ENCODE measurements at regions of chr17 and their contacts with region 1.

Region 1: DNA sequence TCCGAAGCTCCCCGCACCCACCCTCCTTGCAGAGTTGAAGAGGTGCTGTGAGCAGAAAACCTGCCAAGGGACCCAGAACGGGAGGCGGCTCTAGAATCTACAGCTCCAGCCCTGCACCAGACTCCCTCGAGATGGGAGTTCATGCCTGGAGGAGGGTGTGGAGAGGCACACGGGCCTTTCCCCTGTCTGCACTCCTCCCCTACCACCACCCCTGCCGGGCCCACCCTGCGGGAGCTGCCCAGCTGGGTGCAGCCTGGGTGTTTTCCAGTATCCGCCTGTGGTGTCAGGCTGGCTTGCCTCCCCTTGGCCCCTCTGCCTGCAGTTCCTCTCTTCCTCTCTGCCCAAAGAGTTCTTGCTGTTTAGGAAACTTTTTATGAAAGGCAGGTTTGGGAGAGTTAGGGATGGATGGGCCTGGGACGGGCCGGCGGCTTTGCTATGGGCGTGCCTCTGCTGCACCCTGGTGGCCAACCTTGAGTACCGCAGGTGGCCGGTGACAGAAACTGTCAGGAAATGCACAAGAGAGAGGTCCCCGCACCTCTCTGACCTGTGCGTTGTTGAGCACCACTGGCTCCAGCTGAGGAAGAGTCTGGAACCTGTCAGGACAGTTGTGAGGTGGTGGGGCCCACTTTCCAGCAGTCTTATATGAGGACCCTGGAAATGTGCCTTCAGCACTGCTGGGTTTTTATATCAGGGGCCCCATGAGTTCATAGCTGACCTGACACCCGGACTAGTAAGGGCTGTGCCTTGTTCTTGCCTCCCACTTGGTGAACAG is 354.1 kb downstream of the SEC14L1 start:
- DNase-seq: peak; percentile 79 to 96
- H3K4me3 ChIP-seq: no peak overlapping the region
- CTCF ChIP-seq: peak in 2 of 3 donors; percentile 82 to 97
- POLR2A ChIP-seq: no peak

Region 2: GRCh38 chr17:77331301-77331864 is 163.5 kb before region 1 on chr17:
- intact Hi-C with region 1: loop called (anchors 2 kb)
- DNase-seq: peak; percentile 90 to 98
- H3K4me3 ChIP-seq: no peak overlapping the region
- CTCF ChIP-seq: peak in 1 of 3 donors; percentile 97
- POLR2A ChIP-seq: no peak